ENCODE measurements at regions of chr6 and their contacts with region 1.

Region 1: DNA sequence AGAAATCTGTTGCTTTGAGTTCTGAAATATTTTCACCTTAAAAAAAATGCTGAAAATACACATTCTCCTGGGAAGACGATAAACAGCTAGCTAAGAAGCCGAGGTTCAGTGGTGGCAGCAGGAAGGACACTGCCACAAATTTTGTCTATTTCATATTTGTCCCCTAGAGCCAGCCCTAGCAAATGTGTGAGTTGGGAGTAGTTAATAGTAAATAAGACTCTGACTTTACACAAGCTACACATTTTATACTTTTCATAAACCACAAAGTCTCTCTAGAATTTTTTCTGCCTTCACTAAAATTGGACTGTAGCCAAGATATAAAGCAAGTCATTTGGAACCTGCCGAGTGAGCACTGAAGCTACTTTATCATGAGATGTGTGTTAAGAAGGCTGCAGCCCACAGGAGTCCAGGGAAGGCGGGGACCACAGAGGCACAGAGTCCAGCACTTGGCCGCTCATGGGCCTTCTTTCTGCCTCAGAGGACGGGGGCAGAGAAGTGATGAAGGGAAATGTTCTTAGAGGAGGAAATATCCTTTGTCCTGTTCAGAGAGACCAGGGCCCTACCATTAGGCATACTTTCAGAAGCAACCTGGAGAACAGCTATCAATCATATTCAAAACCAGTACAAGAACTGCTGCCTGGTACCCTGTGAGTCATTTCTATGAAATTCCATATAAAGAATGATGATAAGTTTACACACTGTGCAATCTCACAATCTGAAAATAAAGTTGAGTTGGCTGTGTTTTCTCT is 241.7 kb upstream of the TAB2 start:
- DNase-seq: no peak
- ATAC-seq: peak; percentile 47
- H3K4me3 Mint-ChIP-seq: no peak overlapping the region
- H3K27ac Mint-ChIP-seq: peak overlapping the region; percentile 13
- H3K4me1 Mint-ChIP-seq: peaks cover 25% of the 10 kb centered on the region
- H3K27me3 Mint-ChIP-seq: no peaks in the 10 kb centered on the region
- CTCF ChIP-seq: no peak

Region 2: GRCh38 chr6:149060300-149060997 is 15.3 kb before region 1 on chr6:
- CTCF ChIA-PET with region 1: interaction called, 14 read pairs
- POLR2A ChIA-PET with region 1: interaction called, 17 read pairs
- intact Hi-C with region 1: no loop called
- DNase-seq: peak; percentile 77
- ATAC-seq: peak; percentile 93
- H3K4me3 Mint-ChIP-seq: peak overlapping the region; percentile 60
- H3K27ac Mint-ChIP-seq: peak overlapping the region; percentile 84
- H3K4me1 Mint-ChIP-seq: peaks cover 43% of the 10 kb centered on the region
- H3K27me3 Mint-ChIP-seq: no peaks in the 10 kb centered on the region
- CTCF ChIP-seq: no peak

Region 3: DNA sequence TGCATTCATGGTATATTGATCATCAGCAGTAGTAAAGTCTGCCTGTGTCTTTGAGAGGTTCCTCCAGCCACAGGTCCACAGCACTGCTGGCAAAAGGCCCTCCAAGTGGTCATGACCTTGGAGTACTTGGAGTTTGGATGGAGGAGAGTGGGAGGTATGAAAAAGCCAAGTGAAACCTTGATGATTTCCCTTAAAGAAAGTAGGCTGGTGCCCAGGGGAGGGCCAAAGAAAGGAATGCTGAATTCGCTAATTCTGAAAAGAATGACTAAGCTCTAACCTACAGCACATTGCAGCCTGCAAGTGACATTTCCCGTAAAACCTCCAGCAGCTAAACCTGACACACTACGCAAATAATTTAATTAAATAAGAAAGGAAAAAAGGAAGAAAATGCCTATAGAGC is 18.4 kb after region 1 on chr6:
- CTCF ChIA-PET with region 1: interaction called, 10 read pairs
- POLR2A ChIA-PET with region 1: interaction called, 4 read pairs
- intact Hi-C with region 1: no loop called
- DNase-seq: peak; percentile 23
- ATAC-seq: no peak
- H3K4me3 Mint-ChIP-seq: peak overlapping the region; percentile 62
- H3K27ac Mint-ChIP-seq: peak overlapping the region; percentile 96
- H3K4me1 Mint-ChIP-seq: peaks cover 50% of the 10 kb centered on the region
- H3K27me3 Mint-ChIP-seq: no peaks in the 10 kb centered on the region
- CTCF ChIP-seq: no peak